ENCODE measurements at regions of chr19 and their contacts with region 1.

Region 1: GRCh38 chr19:10551698-10552301 is 8.1 kb downstream of the ATG4D start:
- DNase-seq: peak; percentile 51
- H3K4me3 ChIP-seq: no peak overlapping the region
- H3K27ac ChIP-seq: no peak overlapping the region
- H3K4me1 ChIP-seq: peaks cover 39% of the 10 kb centered on the region
- H3K27me3 ChIP-seq: no peaks in the 10 kb centered on the region
- CTCF ChIP-seq: peak; percentile 39 to 56

Region 2: DNA sequence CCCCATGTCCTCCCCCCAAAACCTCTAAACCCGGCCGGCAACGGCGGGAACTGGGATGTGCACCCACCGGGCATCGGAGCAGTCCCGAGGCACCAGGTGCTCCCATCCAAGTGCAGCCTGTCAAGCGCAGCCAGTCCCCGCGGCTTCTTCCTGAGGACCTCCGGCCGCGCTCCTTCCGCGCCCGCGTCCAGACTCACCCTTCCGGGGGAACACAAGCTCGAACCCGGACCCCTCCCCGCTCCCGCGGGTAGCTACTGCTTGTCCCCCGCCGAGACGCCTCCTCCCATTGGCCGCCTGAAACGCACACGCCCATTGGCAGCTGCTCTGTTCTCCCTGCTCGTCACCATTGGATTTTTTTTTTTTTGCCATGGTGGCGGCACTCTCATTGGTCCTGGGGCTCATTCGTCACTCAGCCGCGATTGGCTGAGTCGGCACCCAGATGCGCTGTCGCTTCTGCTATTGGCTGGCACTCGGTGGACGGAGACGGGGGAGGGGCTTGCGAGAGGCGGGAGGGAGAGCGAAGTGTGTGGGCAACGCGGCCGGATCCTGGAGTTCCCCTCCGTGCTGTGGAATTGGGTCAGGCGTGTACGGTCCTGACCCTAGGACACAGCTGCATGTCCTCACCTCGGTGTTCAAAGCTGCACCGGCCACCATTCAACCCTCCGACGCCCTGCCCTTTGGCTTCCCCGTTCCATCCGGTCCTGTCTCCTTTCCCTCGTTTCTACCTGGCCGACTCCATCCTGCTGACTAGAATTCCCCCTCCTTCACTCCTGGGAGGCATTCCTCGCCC is 171.3 kb before region 1 on chr19 and contains the start of gene TYK2:
- CTCF ChIA-PET with region 1: no interaction called
- dilution Hi-C with region 1: no loop called
- in situ Hi-C with region 1: no loop called
- intact Hi-C with region 1: no loop called
- DNase-seq: peak; percentile 99
- H3K4me3 ChIP-seq: peak within 1 kb of the TSS; percentile 81 to 99 (median 92)
- H3K27ac ChIP-seq: peak within 1 kb of the TSS; percentile 65
- H3K4me1 ChIP-seq: peaks cover 11% of the 10 kb centered on the region
- H3K27me3 ChIP-seq: no peaks in the 10 kb centered on the region
- CTCF ChIP-seq: no peak
- total RNA-seq, gene TYK2: 43.5 to 110 TPM

Region 3: GRCh38 chr19:10486538-10486937 is 65.3 kb before region 1 on chr19:
- CTCF ChIA-PET with region 1: no interaction called
- dilution Hi-C with region 1: loop called (anchors 5 kb)
- in situ Hi-C with region 1: no loop called
- intact Hi-C with region 1: no loop called
- DNase-seq: no peak
- H3K4me3 ChIP-seq: no peak overlapping the region
- H3K27ac ChIP-seq: no peak overlapping the region
- H3K4me1 ChIP-seq: no peaks in the 10 kb centered on the region
- H3K27me3 ChIP-seq: no peaks in the 10 kb centered on the region
- CTCF ChIP-seq: no peak

Region 4: DNA sequence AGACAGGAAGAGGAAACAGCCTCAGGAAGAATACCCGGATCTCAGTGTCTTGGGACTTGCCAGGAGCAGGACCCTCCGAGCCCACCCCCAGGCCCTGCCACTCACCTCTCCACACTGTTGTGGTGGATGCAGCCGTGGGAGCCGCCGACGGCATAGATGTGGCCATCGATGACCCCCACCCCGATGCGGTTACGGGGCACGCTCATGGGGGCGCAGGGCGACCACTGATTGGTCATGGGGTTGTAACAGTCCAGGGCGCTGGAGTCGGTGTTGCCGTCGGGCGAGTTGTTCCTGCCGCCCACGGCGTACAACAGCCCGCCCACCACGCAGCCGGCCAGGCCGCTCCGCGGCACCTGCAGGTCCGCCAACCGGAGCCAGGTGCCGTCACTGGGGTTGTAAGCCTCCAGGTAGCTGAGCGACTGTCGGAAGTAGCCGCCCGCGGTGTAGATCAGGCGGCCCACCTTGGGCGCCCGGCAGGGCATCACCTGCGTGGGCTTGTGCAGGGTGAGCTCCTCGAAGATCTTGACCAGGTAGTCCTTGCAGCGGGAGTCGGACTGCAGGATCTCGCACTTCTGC is 60.2 kb before region 1 on chr19:
- CTCF ChIA-PET with region 1: interaction called, 14 read pairs
- dilution Hi-C with region 1: loop called (anchors 5 kb)
- in situ Hi-C with region 1: no loop called
- intact Hi-C with region 1: no loop called
- DNase-seq: no peak
- H3K4me3 ChIP-seq: no peak overlapping the region
- H3K27ac ChIP-seq: no peak overlapping the region
- H3K4me1 ChIP-seq: no peaks in the 10 kb centered on the region
- H3K27me3 ChIP-seq: no peaks in the 10 kb centered on the region
- CTCF ChIP-seq: no peak

Region 5: GRCh38 chr19:10510301-10510802 is 41.4 kb before region 1 on chr19:
- CTCF ChIA-PET with region 1: no interaction called
- dilution Hi-C with region 1: loop called (anchors 5 kb)
- in situ Hi-C with region 1: loop called in 1 of 2 experiments (anchors 10 kb)
- intact Hi-C with region 1: loop called (anchors 1 kb)
- DNase-seq: peak; percentile 72
- H3K4me3 ChIP-seq: no peak overlapping the region
- H3K27ac ChIP-seq: no peak overlapping the region
- H3K4me1 ChIP-seq: peaks cover 14% of the 10 kb centered on the region
- H3K27me3 ChIP-seq: no peaks in the 10 kb centered on the region
- CTCF ChIP-seq: peak; percentile 46 to 73

Region 6: DNA sequence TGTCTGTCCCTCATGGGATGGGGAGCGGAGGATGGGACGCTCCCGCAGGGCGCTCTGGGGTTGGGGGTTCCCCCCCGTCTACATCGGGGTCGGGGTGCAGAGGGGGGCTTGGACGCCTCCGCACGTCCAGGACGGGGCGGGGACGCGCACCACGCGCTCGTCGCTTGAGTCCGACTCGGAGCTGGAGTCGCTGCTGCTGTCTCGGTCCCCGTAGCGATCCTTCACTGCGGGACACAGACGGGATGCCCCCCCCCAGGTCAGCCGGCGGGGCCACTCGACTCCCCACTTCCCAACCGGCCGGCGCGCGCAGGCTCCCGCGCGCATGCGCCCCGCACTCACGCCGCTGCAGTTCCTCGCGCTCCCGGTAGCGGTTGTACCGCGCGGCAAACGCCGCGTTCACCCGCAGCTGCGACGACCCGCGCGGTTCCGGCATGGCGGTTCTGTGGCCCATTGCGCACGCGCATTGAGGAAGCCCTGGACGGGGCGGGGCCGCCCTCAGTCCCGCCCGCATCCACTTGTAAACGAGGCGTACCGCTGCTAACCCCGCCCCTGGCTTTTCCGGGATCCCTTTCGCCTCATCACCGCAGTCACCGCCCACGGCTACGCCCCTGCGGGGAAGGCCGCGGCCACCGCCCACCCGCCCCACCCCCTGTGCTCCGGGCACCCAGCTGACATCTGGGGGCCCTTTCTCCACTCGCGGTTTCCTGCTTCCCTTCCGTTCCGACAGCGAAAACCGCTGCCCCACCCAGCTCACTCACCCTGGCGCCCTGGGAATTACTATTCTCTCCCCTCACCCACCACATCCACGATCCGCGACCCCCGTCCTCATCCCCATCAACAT is 14.0 kb after region 1 on chr19 and contains the start of gene KRI1:
- CTCF ChIA-PET with region 1: no interaction called
- dilution Hi-C with region 1: no loop called
- in situ Hi-C with region 1: no loop called
- intact Hi-C with region 1: loop called (anchors 1 kb)
- DNase-seq: peak; percentile 94
- H3K4me3 ChIP-seq: peak within 1 kb of the TSS; percentile 90 to 95 (median 92)
- H3K27ac ChIP-seq: peak within 1 kb of the TSS; percentile 53
- H3K4me1 ChIP-seq: peaks cover 39% of the 10 kb centered on the region
- H3K27me3 ChIP-seq: no peaks in the 10 kb centered on the region
- CTCF ChIP-seq: peak; percentile 16 to 42
- total RNA-seq, gene KRI1: 10.3 to 32.7 TPM